OCI-LY7 (cell line): ENCODE measurements at regions of chr14 and their contacts with region 1.

Region 1: GRCh38 chr14:71117839-71118743 is 210.8 kb downstream of the PCNX1 start:
- DNase-seq: peak; percentile 24
- H3K4me3 ChIP-seq: no peak overlapping the region
- H3K27ac ChIP-seq: peak overlapping the region; percentile 99
- H3K4me1 ChIP-seq: peaks cover 54% of the 10 kb centered on the region
- CTCF ChIP-seq: no peak

Region 2: GRCh38 chr14:70655110-70655826 is 462.8 kb before region 1 on chr14:
- CTCF ChIA-PET with region 1: no interaction called
- POLR2A ChIA-PET with region 1: no interaction called
- intact Hi-C with region 1: loop called (anchors 5 kb)
- DNase-seq: peak; percentile 95
- H3K4me3 ChIP-seq: peak overlapping the region; percentile 64
- H3K27ac ChIP-seq: peak overlapping the region; percentile 99
- H3K4me1 ChIP-seq: peaks cover 87% of the 10 kb centered on the region
- CTCF ChIP-seq: no peak

Region 3: DNA sequence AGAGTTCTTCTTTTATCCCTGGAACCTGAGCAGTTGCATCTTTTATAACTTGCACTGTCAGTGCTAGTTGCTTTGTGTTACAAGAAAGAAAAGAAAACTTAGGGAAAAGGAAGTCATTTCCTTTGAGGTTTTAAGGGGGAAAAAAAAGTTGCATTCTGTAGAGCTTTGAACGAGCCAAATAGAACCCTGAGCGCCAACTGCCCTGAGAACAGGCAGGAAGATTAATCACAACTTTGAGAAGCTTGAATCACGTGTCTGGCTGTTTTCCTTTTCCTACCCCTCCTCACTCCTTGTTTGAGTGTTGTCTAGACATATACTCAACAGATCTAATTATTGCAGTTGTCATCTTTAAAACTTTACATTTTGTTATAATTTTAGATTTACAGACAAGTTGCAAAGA is 198.3 kb before region 1 on chr14:
- CTCF ChIA-PET with region 1: no interaction called
- POLR2A ChIA-PET with region 1: no interaction called
- intact Hi-C with region 1: no loop called
- DNase-seq: no peak
- H3K4me3 ChIP-seq: no peak overlapping the region
- H3K27ac ChIP-seq: no peak overlapping the region
- H3K4me1 ChIP-seq: peaks cover 11% of the 10 kb centered on the region
- CTCF ChIP-seq: no peak

Region 4: DNA sequence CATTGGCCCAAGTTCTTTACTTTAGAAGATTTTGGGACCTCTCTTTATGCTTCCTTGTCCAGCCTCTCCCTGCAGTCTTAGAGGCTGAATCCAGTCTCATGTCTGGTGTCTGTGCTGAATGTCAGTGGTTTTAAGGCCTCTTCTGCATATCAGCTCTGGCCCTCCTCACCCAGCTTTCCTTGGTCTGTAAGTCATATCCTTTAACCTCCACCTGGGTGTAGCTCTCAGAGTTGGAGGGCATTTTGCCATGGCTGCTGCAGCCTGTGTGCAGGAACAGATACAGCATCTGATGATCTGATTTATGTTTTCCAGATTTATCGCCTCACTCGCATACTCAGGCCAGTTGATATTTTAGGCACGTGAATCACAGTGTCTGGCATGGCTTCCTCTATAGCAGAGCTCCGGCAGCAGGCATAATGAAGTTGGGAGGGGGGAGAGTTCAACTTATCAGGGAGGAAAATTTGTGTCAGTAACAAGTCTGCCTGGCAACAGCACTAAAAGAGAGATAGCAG is 124.2 kb after region 1 on chr14:
- CTCF ChIA-PET with region 1: no interaction called
- POLR2A ChIA-PET with region 1: no interaction called
- intact Hi-C with region 1: no loop called
- DNase-seq: no peak
- H3K4me3 ChIP-seq: no peak overlapping the region
- H3K27ac ChIP-seq: no peak overlapping the region
- H3K4me1 ChIP-seq: no peaks in the 10 kb centered on the region
- CTCF ChIP-seq: no peak

Region 5: DNA sequence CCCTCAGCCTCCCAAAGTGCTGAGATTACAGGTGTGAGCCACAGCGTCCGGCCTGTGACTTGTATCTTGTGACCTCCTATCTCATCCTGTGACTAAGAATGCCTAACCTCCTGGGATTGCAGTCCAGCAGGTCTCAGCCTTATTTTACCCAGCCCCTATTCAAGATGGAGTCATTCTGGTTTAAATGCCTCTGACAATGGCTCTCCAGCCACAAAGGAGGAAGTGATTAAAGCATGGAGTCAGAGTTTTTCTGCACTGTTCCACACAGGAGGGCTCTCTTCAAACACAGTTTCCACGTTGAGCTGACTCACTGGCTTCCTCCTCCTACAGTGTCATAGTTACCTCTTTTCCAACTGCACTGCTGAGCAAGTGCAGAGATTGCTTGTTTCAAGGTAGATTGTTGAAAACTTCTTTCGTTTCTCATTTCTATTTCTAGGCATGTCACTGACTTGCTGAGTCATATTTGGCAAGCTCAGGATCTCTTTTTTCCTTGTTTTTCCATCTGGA is 172.9 kb after region 1 on chr14:
- CTCF ChIA-PET with region 1: no interaction called
- POLR2A ChIA-PET with region 1: no interaction called
- intact Hi-C with region 1: no loop called
- DNase-seq: peak; percentile 11
- H3K4me3 ChIP-seq: no peak overlapping the region
- H3K27ac ChIP-seq: no peak overlapping the region
- H3K4me1 ChIP-seq: peaks cover 14% of the 10 kb centered on the region
- CTCF ChIP-seq: no peak

Region 6: GRCh38 chr14:71403656-71404055 is 285.6 kb after region 1 on chr14:
- CTCF ChIA-PET with region 1: no interaction called
- POLR2A ChIA-PET with region 1: no interaction called
- intact Hi-C with region 1: loop called (anchors 10 kb)
- DNase-seq: peak; percentile 56
- H3K4me3 ChIP-seq: no peak overlapping the region
- H3K27ac ChIP-seq: no peak overlapping the region
- H3K4me1 ChIP-seq: peaks cover 11% of the 10 kb centered on the region
- CTCF ChIP-seq: no peak